ENCODE measurements at regions of chr19 and their contacts with region 1.

Region 1: DNA sequence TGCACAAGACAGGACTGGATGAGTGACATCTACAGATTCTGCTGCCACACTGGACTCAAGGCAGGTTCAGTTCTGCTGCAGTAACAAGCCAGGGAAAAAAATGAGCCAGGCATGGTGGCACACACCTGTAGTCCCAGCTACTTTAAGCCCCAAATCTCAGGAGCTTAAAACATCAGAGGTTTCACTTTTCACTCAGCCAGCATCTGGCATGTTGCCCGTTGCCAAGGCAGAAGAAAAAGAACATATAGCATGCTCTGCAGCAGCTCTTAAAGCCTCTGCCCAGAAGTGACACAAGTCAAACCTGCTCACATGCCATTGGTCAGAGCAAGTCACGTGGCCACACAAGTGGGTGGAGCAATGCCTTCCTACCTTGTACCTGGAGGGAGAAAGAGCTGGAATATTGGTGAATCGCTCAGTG is 14.7 kb upstream of the ADGRE5 start:
- DNase-seq: peak; percentile 92
- ATAC-seq: peak; percentile 64
- H3K4me3 ChIP-seq: no peak overlapping the region
- H3K27ac ChIP-seq: peak overlapping the region; percentile 11; the same call in 1 of the 2 replicates
- H3K4me1 ChIP-seq: peaks cover 33 to 54% of the 10 kb centered on the region in 2 experiments
- H3K27me3 ChIP-seq: no peaks in the 10 kb centered on the region
- CTCF ChIP-seq: no peak
- POLR2A ChIP-seq: no peak
- RAD21 ChIP-seq: no peak

Region 2: GRCh38 chr19:14383661-14384555 is 17.4 kb after region 1 on chr19:
- CTCF ChIA-PET with region 1: interaction called, 9 read pairs
- POLR2A ChIA-PET with region 1: interaction called, 33 read pairs
- RAD21 ChIA-PET with region 1: interaction called in 1 of 2 experiments, 4 read pairs
- intact Hi-C with region 1: no loop called
- DNase-seq: no peak
- ATAC-seq: no peak
- H3K4me3 ChIP-seq: peak overlapping the region; percentile 77 to 96
- H3K27ac ChIP-seq: peak overlapping the region; percentile 97
- H3K4me1 ChIP-seq: peaks cover 45 to 58% of the 10 kb centered on the region in 2 experiments
- H3K27me3 ChIP-seq: no peaks in the 10 kb centered on the region
- CTCF ChIP-seq: no peak
- POLR2A ChIP-seq: no peak
- RAD21 ChIP-seq: no peak

Region 3: DNA sequence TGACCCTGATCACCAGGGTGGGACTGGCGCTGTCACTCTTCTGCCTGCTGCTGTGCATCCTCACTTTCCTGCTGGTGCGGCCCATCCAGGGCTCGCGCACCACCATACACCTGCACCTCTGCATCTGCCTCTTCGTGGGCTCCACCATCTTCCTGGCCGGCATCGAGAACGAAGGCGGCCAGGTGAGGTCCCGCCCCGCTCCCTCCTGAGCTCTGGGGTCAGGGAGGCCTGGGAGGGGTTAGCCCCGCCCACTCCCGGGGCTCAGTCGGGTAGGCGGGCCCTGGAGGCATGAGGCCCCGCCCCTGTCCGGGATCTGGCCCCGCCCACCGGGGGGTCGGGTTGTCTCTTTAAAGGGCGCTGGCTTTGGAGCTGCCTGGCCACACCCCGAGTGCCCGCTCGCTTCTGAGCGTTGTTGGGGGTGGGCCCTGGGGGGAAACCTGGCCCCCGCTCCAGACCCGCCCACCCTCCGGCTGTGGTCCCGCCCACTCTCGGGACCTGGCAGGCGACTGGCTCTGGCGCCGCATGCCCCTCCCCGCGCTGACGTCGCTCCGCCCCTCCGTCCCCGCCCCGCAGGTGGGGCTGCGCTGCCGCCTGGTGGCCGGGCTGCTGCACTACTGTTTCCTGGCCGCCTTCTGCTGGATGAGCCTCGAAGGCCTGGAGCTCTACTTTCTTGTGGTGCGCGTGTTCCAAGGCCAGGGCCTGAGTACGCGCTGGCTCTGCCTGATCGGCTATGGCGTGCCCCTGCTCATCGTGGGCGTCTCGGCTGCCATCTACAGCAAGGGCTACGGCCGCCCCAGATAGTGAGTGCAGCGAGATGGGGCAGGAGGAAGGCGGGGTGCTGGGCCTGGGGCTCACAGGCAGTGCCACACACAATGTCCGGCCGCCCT is 39.5 kb after region 1 on chr19:
- CTCF ChIA-PET with region 1: interaction called, 15 read pairs
- POLR2A ChIA-PET with region 1: interaction called, 6 read pairs
- RAD21 ChIA-PET with region 1: interaction called, 5 to 6 read pairs
- intact Hi-C with region 1: loop called (anchors 2 kb)
- DNase-seq: peak; percentile 89
- ATAC-seq: peak; percentile 86
- H3K4me3 ChIP-seq: no peak overlapping the region
- H3K27ac ChIP-seq: peak overlapping the region; percentile 64
- H3K4me1 ChIP-seq: peaks cover 9 to 35% of the 10 kb centered on the region in 2 experiments; a peak in 3 of 4 replicates
- H3K27me3 ChIP-seq: no peaks in the 10 kb centered on the region
- CTCF ChIP-seq: peak; percentile 57 to 90 (median 61)
- POLR2A ChIP-seq: no peak
- RAD21 ChIP-seq: peak; percentile 94

Region 4: GRCh38 chr19:14479975-14480699 is 113.6 kb after region 1 on chr19:
- CTCF ChIA-PET with region 1: interaction called, 3 read pairs
- POLR2A ChIA-PET with region 1: no interaction called
- RAD21 ChIA-PET with region 1: no interaction called
- intact Hi-C with region 1: loop called (anchors 5 kb)
- DNase-seq: no peak
- ATAC-seq: peak; percentile 71
- H3K4me3 ChIP-seq: no peak overlapping the region
- H3K27ac ChIP-seq: peak overlapping the region; percentile 37; the same call in 1 of the 2 replicates
- H3K4me1 ChIP-seq: peaks cover 18 to 35% of the 10 kb centered on the region in 2 experiments; a peak in 3 of 4 replicates
- H3K27me3 ChIP-seq: no peaks in the 10 kb centered on the region
- CTCF ChIP-seq: peak; percentile 77 to 95 (median 94)
- POLR2A ChIP-seq: no peak
- RAD21 ChIP-seq: peak; percentile 77

Measured in HCT116 (cell line).